H1 (cell line): ENCODE measurements at regions of chr11 and their contacts with region 1.

Region 1: DNA sequence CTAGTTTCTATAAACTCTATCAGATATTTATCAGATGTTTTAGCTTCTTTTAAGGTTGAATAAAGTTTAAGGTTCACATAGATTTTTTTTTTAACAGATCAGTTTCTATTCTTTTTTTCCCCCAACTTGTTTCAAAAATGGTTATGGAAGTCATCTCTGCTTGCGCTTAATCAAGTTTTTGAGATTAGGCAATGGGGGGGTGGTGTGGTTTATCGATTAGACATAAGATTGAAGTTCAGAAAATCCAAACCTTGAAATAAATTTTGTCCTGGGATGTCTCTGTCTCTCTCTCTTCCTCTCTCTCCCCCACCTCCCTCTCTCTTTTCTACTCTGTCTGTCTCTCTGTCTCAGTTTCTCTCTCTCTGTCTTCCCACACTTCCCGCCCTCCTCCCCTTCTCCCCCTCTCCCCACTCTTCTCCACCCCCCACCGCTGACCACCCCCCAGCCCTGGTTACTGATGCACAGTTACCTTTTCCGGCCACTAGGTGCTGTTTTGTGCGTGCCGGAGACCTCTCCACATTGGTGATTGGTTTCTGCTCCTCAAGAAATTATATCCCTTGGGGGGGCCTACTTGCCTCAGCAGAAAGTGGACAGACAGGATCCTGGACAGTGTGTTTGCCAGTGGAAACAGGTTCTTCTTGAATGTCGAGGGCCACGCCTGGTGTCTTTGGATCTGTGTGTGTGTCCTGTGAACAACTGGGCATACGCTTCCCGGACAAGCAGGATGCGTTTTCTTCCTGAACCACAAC is 29.7 kb upstream of the ANO1 start:
- DNase-seq: peak in 1 of 2 experiments; percentile 69
- H3K4me3 ChIP-seq: no peak overlapping the region
- H3K27ac ChIP-seq: no peak overlapping the region
- H3K4me1 ChIP-seq: peaks cover 0 to 3% (median 0%) of the 10 kb centered on the region in 4 experiments; a peak in 1 of 7 replicates
- H3K27me3 ChIP-seq: no peaks in the 10 kb centered on the region
- CTCF ChIP-seq: peak; percentile 60 to 79 (median 68)
- EP300 ChIP-seq: no peak
- POLR2A ChIP-seq: no peak
- RAD21 ChIP-seq: peak; percentile 44 to 62

Region 2: DNA sequence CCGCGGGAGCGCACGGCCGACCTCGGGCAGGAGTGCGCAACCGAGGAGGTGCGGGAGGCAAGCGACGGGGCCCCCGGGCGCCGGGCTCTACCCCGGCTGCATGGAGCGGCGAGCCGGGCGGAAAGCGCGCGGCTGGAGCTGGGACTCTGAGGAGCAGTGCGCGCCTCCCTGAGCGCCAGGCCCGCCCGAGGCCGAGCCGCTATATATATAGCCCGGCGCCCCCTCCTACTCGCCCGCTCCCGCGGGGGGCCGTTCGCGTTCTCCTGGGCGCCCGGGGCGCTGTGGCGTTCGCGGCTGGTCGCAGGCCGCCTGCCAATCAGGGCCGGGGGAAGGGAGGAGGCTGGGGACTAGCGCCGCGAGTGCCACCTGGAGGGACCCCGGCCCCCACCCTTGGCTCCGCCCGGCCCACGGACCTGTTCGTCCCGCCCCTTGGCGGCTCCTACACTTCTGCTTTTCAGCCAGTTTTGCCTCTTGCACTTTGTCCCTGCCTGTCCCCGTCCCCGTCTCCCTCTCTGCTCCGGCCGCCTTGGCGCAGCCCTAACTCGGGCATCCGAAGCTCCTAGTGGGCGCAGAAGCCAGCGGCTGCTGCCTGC is 273.2 kb before region 1 on chr11 and contains the start of gene FGF4:
- CTCF ChIA-PET with region 1: no interaction called
- POLR2A ChIA-PET with region 1: no interaction called
- DNase-seq: peak; percentile 21 to 83
- H3K4me3 ChIP-seq: peak within 1 kb of the TSS; percentile 23 to 60 (median 36)
- H3K27ac ChIP-seq: no peak within 1 kb of the TSS
- H3K4me1 ChIP-seq: peaks cover 11 to 36% (median 28%) of the 10 kb centered on the region in 4 experiments
- H3K27me3 ChIP-seq: peaks cover 20 to 50% (median 46%) of the 10 kb centered on the region in 4 experiments
- CTCF ChIP-seq: no peak
- EP300 ChIP-seq: no peak
- POLR2A ChIP-seq: no peak
- RAD21 ChIP-seq: no peak
- total RNA-seq, gene FGF4: 2.0 TPM in 2 replicates

Region 3: DNA sequence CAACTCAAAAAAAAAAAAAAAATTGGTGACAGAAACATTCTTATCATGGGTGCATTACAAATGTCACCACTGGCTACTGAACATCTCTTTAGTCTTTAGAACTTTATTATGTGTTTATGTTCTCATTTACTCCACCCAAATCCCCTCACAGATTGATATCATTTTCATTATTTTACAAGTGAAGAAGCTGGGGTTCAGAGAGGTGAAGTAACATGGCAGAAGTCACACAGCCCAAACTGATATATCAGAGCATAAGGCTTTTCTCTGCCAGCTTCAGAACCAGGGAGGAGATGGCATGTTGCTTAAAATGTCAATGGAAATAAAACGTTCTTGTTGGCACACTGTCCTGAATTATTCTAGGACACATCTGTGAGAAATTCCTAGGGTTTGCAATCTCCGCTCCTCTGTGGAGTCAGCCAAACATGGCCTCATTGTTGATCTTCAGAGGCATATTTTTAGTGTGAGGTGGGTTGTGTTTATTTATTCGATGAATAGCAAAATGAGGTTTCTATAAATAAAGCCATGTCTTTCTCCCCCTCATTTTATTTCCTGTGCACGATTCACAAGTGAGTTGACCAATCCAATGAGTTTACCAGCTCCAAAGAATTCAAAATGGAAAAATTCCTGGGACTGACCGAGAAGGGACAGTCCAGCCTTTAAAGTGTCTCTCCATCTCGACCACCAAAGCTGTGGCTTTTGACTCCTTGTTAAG is 43.2 kb before region 1 on chr11:
- CTCF ChIA-PET with region 1: interaction called, 11 read pairs
- POLR2A ChIA-PET with region 1: no interaction called
- DNase-seq: no peak
- H3K4me3 ChIP-seq: no peak overlapping the region
- H3K27ac ChIP-seq: no peak overlapping the region
- H3K4me1 ChIP-seq: peaks cover 0 to 6% (median 2%) of the 10 kb centered on the region in 4 experiments; a peak in 3 of 7 replicates
- H3K27me3 ChIP-seq: peaks cover 0 to 17% (median 10%) of the 10 kb centered on the region in 4 experiments; a peak in 6 of 7 replicates
- CTCF ChIP-seq: no peak
- EP300 ChIP-seq: no peak
- POLR2A ChIP-seq: no peak
- RAD21 ChIP-seq: no peak

Region 4: GRCh38 chr11:70067591-70068341 is 19.3 kb after region 1 on chr11:
- CTCF ChIA-PET with region 1: interaction called, 13 read pairs
- POLR2A ChIA-PET with region 1: no interaction called
- DNase-seq: peak in 1 of 2 experiments; percentile 50
- H3K4me3 ChIP-seq: no peak overlapping the region
- H3K27ac ChIP-seq: no peak overlapping the region
- H3K4me1 ChIP-seq: peaks cover 11 to 35% (median 13%) of the 10 kb centered on the region in 4 experiments
- H3K27me3 ChIP-seq: peaks cover 0 to 7% (median 0%) of the 10 kb centered on the region in 4 experiments; a peak in 1 of 7 replicates
- CTCF ChIP-seq: peak in 1 of 3 experiments; percentile 30; a peak in 2 of 4 replicates
- EP300 ChIP-seq: no peak
- POLR2A ChIP-seq: no peak
- RAD21 ChIP-seq: peak; percentile 33 to 48; a peak in 3 of 4 replicates